ENCODE measurements at regions of chr1 and their contacts with region 1.

Region 1: DNA sequence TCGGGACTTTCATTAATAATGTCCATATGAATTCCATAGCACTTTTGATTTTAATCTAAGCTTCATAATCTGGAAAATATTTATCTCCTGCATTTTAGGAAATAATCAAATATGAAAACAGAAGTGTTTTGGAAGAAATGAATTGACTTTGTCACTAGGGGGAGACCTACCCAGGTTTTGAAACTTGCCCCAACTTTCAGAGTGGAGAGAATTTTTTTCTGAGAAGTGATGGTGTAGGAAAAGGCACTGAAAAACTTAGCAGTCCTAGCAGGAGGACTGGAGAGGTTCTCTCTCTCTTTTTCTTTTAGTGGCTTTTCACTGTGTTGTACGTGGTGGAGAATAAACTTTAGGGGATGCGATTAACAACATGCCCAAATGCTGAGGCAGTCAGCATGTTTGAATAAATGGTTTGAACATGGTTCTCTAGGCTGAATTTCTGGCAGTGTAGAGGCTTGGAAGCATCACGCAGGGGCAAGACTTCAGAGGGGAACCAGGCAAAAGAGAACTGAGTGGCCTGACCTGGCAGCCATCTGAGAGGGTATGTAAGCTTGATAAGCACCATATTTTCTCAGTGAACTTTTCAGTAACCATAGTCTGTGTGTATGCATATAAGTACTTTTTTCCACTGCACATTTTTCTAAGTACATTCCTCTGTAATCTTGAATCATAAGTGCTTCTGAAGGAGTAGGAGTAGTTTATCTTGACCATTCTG is 68.3 kb upstream of the NEK7 start:
- DNase-seq: peak in 1 of 2 donors; percentile 68
- ATAC-seq: peak in 2 of 3 donors; percentile 53 to 65
- H3K4me3 ChIP-seq: no peak overlapping the region
- H3K4me3 Mint-ChIP-seq: no peak overlapping the region
- H3K27ac ChIP-seq: no peak overlapping the region
- H3K27ac Mint-ChIP-seq: no peak overlapping the region
- H3K4me1 ChIP-seq: no peaks in the 10 kb centered on the region
- H3K4me1 Mint-ChIP-seq: peaks cover 5% of the 10 kb centered on the region in 2 donors
- H3K27me3 ChIP-seq: no peaks in the 10 kb centered on the region
- H3K27me3 Mint-ChIP-seq: peaks cover 2 to 6% of the 10 kb centered on the region in 2 donors
- CTCF ChIP-seq: peak; percentile 87

Region 2: DNA sequence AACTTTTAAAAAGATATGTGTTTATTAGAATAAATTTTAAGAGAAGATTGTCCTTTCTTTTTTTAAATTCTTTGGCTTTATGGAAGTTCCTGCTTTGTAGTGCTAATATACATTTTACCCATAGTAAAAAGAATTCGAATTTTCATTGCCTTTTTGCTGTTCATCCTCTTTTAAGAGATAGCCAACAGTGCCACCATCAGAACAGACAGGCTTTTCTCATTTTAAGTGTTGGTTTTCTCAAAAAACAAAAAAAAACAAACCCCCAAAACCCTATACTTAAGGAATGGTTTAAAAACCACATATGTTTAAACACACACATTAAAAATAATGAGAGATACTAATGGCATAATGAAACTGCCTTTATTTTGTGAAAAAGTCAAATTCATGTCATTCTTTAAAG is 187.1 kb after region 1 on chr1:
- intact Hi-C with region 1: loop called (anchors 10 kb)
- DNase-seq: peak in 1 of 2 donors; percentile 28
- ATAC-seq: no peak
- H3K4me3 ChIP-seq: no peak overlapping the region
- H3K4me3 Mint-ChIP-seq: no peak overlapping the region
- H3K27ac ChIP-seq: no peak overlapping the region
- H3K27ac Mint-ChIP-seq: no peak overlapping the region
- H3K4me1 ChIP-seq: no peaks in the 10 kb centered on the region
- H3K4me1 Mint-ChIP-seq: peaks cover 8 to 11% of the 10 kb centered on the region in 2 donors
- H3K27me3 ChIP-seq: no peaks in the 10 kb centered on the region
- H3K27me3 Mint-ChIP-seq: no peaks in the 10 kb centered on the region
- CTCF ChIP-seq: no peak

Region 3: DNA sequence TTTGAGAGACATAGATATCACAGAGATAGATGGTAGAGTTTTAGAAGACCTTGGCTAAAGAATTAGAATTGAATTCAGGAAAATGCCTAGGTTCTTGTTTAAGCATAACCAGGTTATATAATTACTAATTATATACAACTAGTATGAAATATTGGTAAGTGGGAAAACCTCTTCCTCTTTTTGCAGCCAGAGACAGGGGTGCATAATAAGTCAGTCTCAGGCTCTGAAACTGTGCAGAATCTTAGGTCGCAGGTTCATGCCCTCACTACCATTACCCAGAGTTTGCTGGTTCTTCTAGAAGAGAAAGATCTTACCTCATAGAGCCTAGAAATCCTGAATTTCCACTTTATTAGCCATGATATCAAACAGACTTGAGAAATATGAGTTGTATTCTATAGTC is 251.6 kb after region 1 on chr1:
- intact Hi-C with region 1: no loop called
- DNase-seq: no peak
- ATAC-seq: no peak
- H3K4me3 ChIP-seq: no peak overlapping the region
- H3K4me3 Mint-ChIP-seq: no peak overlapping the region
- H3K27ac ChIP-seq: no peak overlapping the region
- H3K27ac Mint-ChIP-seq: no peak overlapping the region
- H3K4me1 ChIP-seq: no peaks in the 10 kb centered on the region
- H3K4me1 Mint-ChIP-seq: no peaks in the 10 kb centered on the region
- H3K27me3 ChIP-seq: no peaks in the 10 kb centered on the region
- H3K27me3 Mint-ChIP-seq: no peaks in the 10 kb centered on the region
- CTCF ChIP-seq: no peak

Region 4: DNA sequence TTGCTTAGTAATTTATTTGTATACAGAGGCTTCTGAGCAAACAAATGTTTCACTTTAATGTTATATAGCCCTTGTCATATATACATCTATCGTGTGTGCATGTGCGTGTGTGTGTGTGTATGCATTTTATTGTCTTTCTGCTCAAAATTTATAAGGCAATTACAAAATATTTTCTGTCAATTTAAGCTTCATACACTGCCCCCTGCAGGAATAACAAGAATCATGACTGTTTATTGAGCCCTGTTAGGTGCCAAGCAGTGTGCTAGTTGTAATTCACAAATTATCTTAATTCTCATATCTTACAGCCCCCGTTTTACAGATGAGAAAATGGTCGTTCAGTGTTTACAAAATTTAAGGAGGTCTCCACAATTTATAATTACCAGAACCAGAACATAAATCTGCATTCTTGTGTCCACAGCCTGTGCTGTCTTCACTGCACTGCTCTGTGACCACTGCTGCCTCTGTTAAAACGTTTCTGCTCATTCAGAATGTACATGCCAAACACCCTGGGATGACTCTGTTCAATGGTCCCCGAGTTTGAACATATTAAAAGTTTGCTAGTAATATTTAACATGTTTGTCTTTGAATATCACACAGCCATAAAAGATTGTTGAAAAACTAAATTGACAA is 270.6 kb after region 1 on chr1:
- intact Hi-C with region 1: loop called (anchors 5 kb)
- DNase-seq: peak in 1 of 2 donors; percentile 52
- ATAC-seq: no peak
- H3K4me3 ChIP-seq: no peak overlapping the region
- H3K4me3 Mint-ChIP-seq: no peak overlapping the region
- H3K27ac ChIP-seq: no peak overlapping the region
- H3K27ac Mint-ChIP-seq: no peak overlapping the region
- H3K4me1 ChIP-seq: no peaks in the 10 kb centered on the region
- H3K4me1 Mint-ChIP-seq: no peaks in the 10 kb centered on the region
- H3K27me3 ChIP-seq: peaks cover 2% of the 10 kb centered on the region
- H3K27me3 Mint-ChIP-seq: peaks cover 0 to 10% of the 10 kb centered on the region in 2 donors
- CTCF ChIP-seq: peak; percentile 50

Region 5: DNA sequence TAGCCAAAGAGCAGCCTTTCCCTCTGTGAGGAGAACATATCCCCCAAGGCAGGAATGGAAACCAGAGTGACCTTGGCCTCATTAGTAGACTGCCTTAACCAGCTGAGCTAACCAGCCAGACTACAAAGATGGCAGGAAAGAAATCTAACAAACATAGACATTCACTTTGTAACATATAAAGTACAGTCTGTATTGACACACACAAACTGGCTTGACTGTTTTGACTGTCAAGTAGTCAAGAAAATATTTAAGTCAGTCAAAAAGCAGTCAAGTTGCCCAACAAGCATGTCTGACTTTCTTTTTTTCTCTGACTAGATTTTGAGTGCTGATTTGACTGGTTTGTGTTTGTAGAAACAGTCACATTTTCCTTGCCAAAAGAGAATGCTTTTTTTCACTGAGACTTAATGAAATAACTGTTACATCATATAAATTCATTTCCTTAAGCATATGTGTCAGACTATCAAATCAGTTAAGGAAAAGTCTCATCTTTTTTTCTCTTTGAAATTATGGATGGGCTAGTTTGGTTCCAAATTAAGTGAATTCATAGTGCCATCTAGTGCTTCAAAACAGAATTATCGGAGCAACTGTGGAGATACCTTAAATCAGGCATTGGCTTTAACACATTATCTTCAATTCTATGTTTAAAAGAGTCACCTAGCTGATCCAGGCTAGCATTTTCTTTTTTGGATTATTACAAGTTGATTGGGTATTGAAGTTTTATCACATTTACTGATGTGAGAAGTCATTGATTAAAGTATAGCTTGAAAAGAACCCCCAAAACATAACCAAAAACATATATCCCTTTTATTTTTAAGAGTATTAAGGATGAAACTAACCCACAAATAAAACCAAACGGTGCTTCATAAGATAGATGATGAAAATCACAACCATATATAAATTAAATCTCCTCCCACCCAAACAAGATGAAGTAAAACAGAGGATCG is 377.0 kb after region 1 on chr1:
- intact Hi-C with region 1: loop called (anchors 1 kb)
- DNase-seq: peak in 1 of 2 donors; percentile 67
- ATAC-seq: peak; percentile 36 to 70 (median 58)
- H3K4me3 ChIP-seq: no peak overlapping the region
- H3K4me3 Mint-ChIP-seq: no peak overlapping the region
- H3K27ac ChIP-seq: no peak overlapping the region
- H3K27ac Mint-ChIP-seq: no peak overlapping the region
- H3K4me1 ChIP-seq: no peaks in the 10 kb centered on the region
- H3K4me1 Mint-ChIP-seq: peaks cover 0 to 17% of the 10 kb centered on the region in 2 donors
- H3K27me3 ChIP-seq: no peaks in the 10 kb centered on the region
- H3K27me3 Mint-ChIP-seq: no peaks in the 10 kb centered on the region
- CTCF ChIP-seq: peak; percentile 67

Measured in natural killer cell (primary cell).